HEK293 (cell line): ENCODE measurements at regions of chr19 and their contacts with region 1.

Region 1: GRCh38 chr19:34345947-34346351 is 19.0 kb upstream of the GPI start:
- H3K4me3 ChIP-seq: no peak overlapping the region
- H3K27ac ChIP-seq: no peak overlapping the region
- H3K4me1 ChIP-seq: no peaks in the 10 kb centered on the region
- CTCF ChIP-seq: peak; percentile 62; the same call in 1 of the 2 replicates

Region 2: GRCh38 chr19:34189199-34189916 is 156.6 kb before region 1 on chr19:
- CTCF ChIA-PET with region 1: no interaction called
- POLR2A ChIA-PET with region 1: no interaction called
- H3K4me3 ChIP-seq: no peak overlapping the region
- H3K27ac ChIP-seq: no peak overlapping the region
- H3K4me1 ChIP-seq: peaks cover 77% of the 10 kb centered on the region
- CTCF ChIP-seq: no peak

Region 3: DNA sequence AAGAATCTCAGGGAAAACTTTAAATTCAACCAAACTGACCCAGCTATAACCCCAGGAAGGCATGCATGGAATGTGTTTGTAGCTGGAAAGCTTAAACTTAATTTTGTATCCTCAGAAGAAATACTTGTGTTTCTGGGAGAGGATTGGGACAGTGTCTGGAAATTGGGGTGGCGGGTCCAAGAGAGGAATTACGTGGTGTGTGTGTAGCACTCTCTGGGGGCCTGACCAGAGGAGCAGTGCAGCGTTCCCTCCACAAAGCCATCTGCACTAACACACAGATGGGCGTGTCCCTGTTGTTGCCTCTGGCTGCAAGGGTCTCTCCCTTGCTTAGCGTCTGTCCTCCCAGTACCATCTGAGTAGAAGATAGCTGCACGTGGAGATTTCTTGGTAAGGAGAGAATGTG is 85.2 kb before region 1 on chr19:
- CTCF ChIA-PET with region 1: interaction called, 10 read pairs
- POLR2A ChIA-PET with region 1: interaction called, 5 read pairs
- H3K4me3 ChIP-seq: no peak overlapping the region
- H3K27ac ChIP-seq: no peak overlapping the region
- H3K4me1 ChIP-seq: peaks cover 40% of the 10 kb centered on the region
- CTCF ChIP-seq: no peak

Region 4: GRCh38 chr19:34327851-34328250 is 18.1 kb before region 1 on chr19:
- CTCF ChIA-PET with region 1: interaction called, 90 read pairs
- POLR2A ChIA-PET with region 1: no interaction called
- H3K4me3 ChIP-seq: no peak overlapping the region
- H3K27ac ChIP-seq: no peak overlapping the region
- H3K4me1 ChIP-seq: peaks cover 8% of the 10 kb centered on the region; the same call in 1 of the 2 replicates
- CTCF ChIP-seq: no peak

Region 5: GRCh38 chr19:34359140-34359953 is 13.4 kb after region 1 on chr19:
- CTCF ChIA-PET with region 1: interaction called, 32 read pairs
- POLR2A ChIA-PET with region 1: interaction called, 6 read pairs
- H3K4me3 ChIP-seq: peak overlapping the region; percentile 39
- H3K27ac ChIP-seq: peak overlapping the region; percentile 89
- H3K4me1 ChIP-seq: peaks cover 8% of the 10 kb centered on the region
- CTCF ChIP-seq: peak; percentile 99

Region 6: GRCh38 chr19:34370983-34371382 is 25.0 kb after region 1 on chr19:
- CTCF ChIA-PET with region 1: interaction called, 12 read pairs
- POLR2A ChIA-PET with region 1: no interaction called
- H3K4me3 ChIP-seq: no peak overlapping the region
- H3K27ac ChIP-seq: no peak overlapping the region; the same call in 1 of the 2 replicates
- H3K4me1 ChIP-seq: peaks cover 11% of the 10 kb centered on the region
- CTCF ChIP-seq: no peak

Region 7: GRCh38 chr19:34393031-34393430 is 47.1 kb after region 1 on chr19:
- CTCF ChIA-PET with region 1: no interaction called
- POLR2A ChIA-PET with region 1: no interaction called
- H3K4me3 ChIP-seq: no peak overlapping the region
- H3K27ac ChIP-seq: no peak overlapping the region
- H3K4me1 ChIP-seq: no peaks in the 10 kb centered on the region
- CTCF ChIP-seq: no peak

Region 8: GRCh38 chr19:34645551-34645950 is 299.6 kb after region 1 on chr19:
- CTCF ChIA-PET with region 1: no interaction called
- POLR2A ChIA-PET with region 1: no interaction called
- H3K4me3 ChIP-seq: no peak overlapping the region
- H3K27ac ChIP-seq: no peak overlapping the region
- H3K4me1 ChIP-seq: no peaks in the 10 kb centered on the region
- CTCF ChIP-seq: no peak